HEK293T (cell line): ENCODE measurements at regions of chr12 and their contacts with region 1.

Region 1: DNA sequence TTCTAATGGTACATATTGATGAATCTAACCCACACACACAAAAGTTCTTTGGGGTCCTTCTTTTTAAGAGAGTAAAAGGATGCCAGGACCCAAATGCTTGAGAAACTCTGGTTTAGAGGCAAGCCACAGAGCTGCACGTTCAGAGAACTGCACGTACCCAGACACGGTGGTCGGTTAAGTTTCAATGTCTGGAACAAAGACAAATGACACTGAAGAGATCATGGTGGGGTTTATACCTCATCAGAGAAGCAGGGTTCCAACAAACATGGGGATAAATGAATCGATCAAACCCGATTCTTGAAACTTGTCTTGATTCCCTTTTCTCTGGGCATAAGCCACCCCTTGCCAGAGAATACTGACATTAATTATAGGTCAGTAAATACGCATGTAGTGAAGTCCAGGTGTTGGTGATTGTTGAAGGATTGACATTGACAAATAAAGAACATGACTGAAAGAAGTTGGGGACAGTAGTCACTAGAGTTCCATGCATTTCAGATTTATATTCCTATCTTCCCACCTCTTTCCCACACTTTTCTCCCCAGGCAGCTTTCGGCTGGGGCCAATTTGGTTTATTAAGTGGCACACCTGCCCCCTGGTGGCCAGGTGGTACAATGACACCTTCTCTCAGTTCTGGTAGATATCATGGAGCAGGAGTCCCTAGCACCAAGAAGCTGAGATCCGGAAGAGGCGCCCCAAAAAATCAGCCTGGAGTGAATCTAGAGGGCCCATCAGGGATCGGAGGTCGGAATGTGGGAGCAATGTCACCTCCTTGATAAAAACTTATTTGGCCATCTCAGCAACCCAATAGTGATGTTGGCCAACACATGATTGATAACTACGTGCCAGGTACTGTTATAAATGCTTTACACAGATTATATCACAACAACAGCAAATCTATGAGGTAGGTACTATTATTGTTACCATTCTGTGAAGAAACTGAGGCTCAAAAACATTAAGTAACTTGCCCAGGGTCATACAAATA is 17.8 kb upstream of the HDAC7 start:
- DNase-seq: peak; percentile 76

Region 2: DNA sequence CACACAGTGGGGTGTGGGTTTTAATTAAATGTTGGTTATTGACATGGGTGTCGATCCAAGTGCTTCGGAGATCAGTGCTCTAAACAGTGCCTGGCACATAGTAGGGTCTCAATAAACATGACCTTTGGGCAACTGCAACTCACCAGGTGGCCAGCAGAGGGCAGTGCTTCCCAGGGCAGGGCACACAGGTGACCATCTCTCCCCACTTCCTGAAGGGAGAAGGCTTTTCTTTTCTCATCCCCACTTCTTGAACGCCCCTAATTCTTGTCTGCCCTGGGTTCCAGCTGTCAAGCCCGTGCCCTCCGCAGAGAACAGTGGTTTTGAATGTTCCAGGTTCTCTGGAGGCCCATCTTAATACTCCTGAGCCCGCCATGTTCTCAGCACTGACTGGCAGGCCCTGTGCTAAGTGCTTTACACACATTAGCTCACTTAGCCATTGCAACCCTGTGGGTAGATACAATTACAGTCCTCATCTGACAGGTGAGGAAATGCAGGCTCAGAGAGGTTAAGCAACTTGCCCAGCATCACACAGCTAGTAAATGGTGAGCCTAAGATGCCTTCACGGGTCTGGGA is 95.1 kb before region 1 on chr12:
- CTCF ChIA-PET with region 1: interaction called, 28 read pairs
- POLR2A ChIA-PET with region 1: interaction called, 3 read pairs
- DNase-seq: peak; percentile 66

Region 3: DNA sequence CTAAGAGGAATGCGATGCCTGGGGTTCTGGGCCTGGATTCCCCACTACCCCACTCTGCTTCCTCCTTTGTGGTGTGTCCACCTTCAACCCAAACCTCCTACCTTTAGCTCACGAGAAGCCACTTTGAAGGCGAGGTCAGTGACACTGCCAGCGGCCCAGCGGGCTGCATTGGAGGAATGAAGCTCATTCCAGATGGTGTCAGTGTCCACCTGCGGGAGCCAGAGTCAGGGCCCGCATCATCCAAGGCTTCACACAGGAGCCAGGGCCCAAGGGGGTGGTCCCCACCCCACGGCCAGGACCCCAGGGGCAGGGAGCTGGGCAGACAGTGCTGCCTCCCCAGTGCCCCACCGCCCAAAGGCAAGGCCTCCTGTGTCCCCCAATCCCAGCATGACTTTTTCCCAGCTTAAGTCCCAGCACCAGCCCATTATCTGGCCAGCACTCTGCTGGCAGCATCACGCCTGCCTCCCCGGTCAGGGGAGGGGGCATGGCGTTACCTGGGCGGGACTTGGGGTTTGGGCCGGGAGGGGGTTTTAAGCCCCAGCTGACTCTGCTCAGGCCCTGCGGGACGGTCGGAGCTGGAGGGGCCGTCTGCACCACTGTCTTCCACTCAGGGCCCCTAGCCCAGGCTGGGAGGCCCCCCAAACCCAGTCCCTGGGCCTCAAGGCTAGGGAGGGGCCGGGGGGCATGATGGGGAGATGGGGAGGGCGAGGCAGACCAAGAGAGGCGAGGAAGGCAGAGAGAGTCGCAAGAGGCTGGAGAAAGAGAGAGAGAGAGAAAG is 47.6 kb before region 1 on chr12:
- CTCF ChIA-PET with region 1: interaction called, 27 read pairs
- POLR2A ChIA-PET with region 1: no interaction called
- DNase-seq: no peak

Region 4: GRCh38 chr12:47812797-47813510 is 24.5 kb before region 1 on chr12:
- CTCF ChIA-PET with region 1: interaction called, 18 read pairs
- POLR2A ChIA-PET with region 1: interaction called, 5 read pairs
- DNase-seq: peak; percentile 58